Ascending aorta (tissue), 2 donors: ENCODE measurements at regions of chr15 and their contacts with region 1.

Region 1: GRCh38 chr15:72599855-72600464 is 54.5 kb upstream of the GOLGA6B start:
- DNase-seq: no peak
- H3K4me3 ChIP-seq: no peak overlapping the region
- H3K27ac ChIP-seq: no peak overlapping the region
- H3K4me1 ChIP-seq: no peaks in the 10 kb centered on the region
- H3K27me3 ChIP-seq: no peaks in the 10 kb centered on the region
- CTCF ChIP-seq: peak in 2 of 3 experiments; percentile 27 to 64

Region 2: GRCh38 chr15:72445426-72445825 is 154.5 kb before region 1 on chr15:
- intact Hi-C with region 1: no loop called
- DNase-seq: no peak
- H3K4me3 ChIP-seq: no peak overlapping the region
- H3K27ac ChIP-seq: no peak overlapping the region
- H3K4me1 ChIP-seq: no peaks in the 10 kb centered on the region
- H3K27me3 ChIP-seq: no peaks in the 10 kb centered on the region
- CTCF ChIP-seq: no peak

Region 3: GRCh38 chr15:72671535-72671934 is 71.6 kb after region 1 on chr15:
- intact Hi-C with region 1: loop called (anchors 2 kb)
- DNase-seq: no peak
- H3K4me3 ChIP-seq: no peak overlapping the region
- H3K27ac ChIP-seq: no peak overlapping the region
- H3K4me1 ChIP-seq: peaks cover 0 to 3% of the 10 kb centered on the region in 2 donors
- H3K27me3 ChIP-seq: no peaks in the 10 kb centered on the region
- CTCF ChIP-seq: no peak

Region 4: DNA sequence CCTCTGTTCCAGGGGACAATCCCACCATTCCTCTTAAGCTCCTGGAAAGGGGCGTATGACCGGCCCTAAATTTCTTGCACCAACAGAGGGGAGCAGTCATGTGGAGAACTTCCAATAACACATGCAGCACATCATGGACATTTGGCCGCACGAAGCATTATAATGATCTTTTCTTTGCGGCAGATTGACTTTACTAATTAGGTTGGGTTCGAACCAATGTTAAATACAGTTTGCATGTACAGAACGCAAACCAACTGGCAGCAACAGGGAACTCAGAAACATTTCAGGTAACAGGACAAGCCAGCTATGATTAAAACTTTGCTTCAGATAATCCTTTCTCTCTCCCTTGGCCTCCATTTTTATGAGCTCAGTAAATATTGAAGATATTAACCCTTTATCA is 284.4 kb after region 1 on chr15:
- intact Hi-C with region 1: no loop called
- DNase-seq: no peak
- H3K4me3 ChIP-seq: no peak overlapping the region
- H3K27ac ChIP-seq: no peak overlapping the region
- H3K4me1 ChIP-seq: no peaks in the 10 kb centered on the region
- H3K27me3 ChIP-seq: no peaks in the 10 kb centered on the region
- CTCF ChIP-seq: no peak